Sciatic nerve (tissue), 2 donors: ENCODE measurements at regions of chr2 and their contacts with region 1.

Region 1: GRCh38 chr2:192162392-192163042 is 32.2 kb downstream of the TMEFF2 start:
- DNase-seq: peak; percentile 74
- ATAC-seq: peak; percentile 84

Region 2: DNA sequence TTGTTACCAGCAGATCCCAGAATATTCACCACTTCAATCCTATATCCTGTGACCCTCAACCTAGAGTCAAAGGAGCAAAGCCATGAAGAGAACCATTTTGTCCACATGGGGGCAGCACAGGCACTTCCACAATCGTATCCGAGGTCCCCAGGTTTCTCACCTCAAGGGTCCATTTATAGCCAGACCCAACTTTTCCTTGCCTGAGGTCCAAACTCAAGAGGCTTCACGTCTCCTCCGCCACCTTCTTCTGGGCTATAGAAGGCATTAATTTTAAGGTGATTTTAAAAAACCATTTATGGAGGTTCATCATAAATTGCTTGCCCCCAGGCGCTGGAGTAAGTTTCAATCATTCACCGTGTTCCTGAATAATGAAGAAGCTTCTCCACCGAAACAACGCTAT is 596.2 kb before region 1 on chr2:
- intact Hi-C with region 1: loop called (anchors 10 kb)
- DNase-seq: peak; percentile 74
- ATAC-seq: peak; percentile 63

Region 3: GRCh38 chr2:191811807-191812602 is 350.5 kb before region 1 on chr2:
- intact Hi-C with region 1: loop called (anchors 10 kb)
- DNase-seq: peak; percentile 72
- ATAC-seq: peak; percentile 93

Region 4: GRCh38 chr2:191846515-191847476 is 315.7 kb before region 1 on chr2 and contains the start of gene CAVIN2:
- intact Hi-C with region 1: no loop called
- DNase-seq: no peak
- ATAC-seq: peak; percentile 87
- total RNA-seq, gene CAVIN2: 71.1 TPM